Testis (tissue), 5 donors: ENCODE measurements at regions of chr15 and their contacts with region 1.

Region 1: GRCh38 chr15:98518823-98519561 is 129.3 kb upstream of the IGF1R start:
- DNase-seq: peak; percentile 69
- H3K4me3 ChIP-seq: no peak overlapping the region
- H3K27ac ChIP-seq: no peak overlapping the region
- H3K4me1 ChIP-seq: no peaks in the 10 kb centered on the region
- H3K27me3 ChIP-seq: no peaks in the 10 kb centered on the region
- CTCF ChIP-seq: peak; percentile 69 to 93 (median 84)
- POLR2A ChIP-seq: no peak

Region 2: DNA sequence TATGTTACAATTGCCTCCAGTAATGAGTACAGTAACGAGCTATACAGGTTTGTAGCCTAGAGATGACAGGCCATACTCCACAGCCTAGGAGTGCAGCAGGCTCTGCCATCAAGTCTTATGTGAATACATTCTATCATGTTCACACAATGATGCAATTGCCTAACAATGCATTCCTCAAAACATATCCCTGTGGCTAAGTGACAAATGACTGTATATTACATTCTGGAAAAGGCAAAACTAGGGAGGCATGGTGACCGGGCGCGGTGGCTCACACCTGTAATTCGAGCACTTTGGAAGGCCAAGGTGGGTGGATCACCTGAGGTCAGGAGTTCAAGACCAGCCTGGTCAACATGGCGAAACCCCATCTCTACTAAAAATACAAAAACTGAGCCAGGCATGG is 63.0 kb before region 1 on chr15:
- intact Hi-C with region 1: no loop called
- DNase-seq: no peak
- H3K4me3 ChIP-seq: no peak overlapping the region
- H3K27ac ChIP-seq: no peak overlapping the region
- H3K4me1 ChIP-seq: no peaks in the 10 kb centered on the region
- H3K27me3 ChIP-seq: no peaks in the 10 kb centered on the region
- CTCF ChIP-seq: no peak
- POLR2A ChIP-seq: no peak

Region 3: GRCh38 chr15:98609144-98609857 is 90.3 kb after region 1 on chr15:
- intact Hi-C with region 1: no loop called
- DNase-seq: no peak
- H3K4me3 ChIP-seq: no peak overlapping the region
- H3K27ac ChIP-seq: no peak overlapping the region
- H3K4me1 ChIP-seq: no peaks in the 10 kb centered on the region
- H3K27me3 ChIP-seq: no peaks in the 10 kb centered on the region
- CTCF ChIP-seq: no peak
- POLR2A ChIP-seq: no peak

Region 4: DNA sequence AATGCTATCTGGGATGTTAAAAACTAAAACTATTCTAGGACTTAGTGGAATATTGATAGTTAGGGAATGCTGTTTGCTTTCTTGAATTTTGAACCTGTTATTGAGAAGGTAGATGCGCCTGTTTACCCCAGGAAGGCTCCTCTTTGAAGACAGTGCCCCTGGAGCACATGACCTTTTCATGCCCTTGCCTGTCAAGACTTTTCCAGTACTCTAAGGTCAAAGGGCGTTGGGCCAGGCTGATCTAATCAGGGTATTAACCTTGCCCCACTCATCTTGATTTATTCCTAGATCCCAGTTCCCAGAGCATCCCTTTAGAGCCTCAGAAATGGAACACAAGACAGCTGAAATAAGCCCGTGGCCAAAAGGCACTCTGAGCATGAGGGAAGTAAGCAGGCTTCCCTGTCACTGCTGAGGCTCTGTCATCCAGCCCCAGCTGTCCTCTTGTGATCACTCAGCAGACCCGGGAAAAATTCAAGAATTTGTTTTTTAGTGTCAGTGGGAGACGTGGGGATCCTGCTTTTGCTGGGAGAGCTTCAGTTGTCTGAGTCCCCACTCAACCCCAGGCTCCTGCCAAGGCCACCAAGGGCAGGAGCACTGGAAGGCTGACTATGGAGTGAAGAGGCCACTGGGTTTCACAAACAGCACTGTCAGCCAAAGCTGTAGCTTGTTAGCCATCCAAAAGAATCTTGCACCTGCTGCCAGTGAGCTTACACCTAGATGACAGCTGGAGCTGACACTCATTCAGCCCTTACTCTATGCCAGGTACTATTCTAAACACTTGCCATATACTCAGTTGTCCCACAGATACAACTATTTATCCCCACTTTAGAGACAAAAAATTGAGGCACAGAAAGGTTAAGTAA is 319.6 kb after region 1 on chr15:
- intact Hi-C with region 1: no loop called
- DNase-seq: no peak
- H3K4me3 ChIP-seq: no peak overlapping the region
- H3K27ac ChIP-seq: no peak overlapping the region
- H3K4me1 ChIP-seq: peaks cover 14% of the 10 kb centered on the region
- H3K27me3 ChIP-seq: no peaks in the 10 kb centered on the region
- CTCF ChIP-seq: no peak
- POLR2A ChIP-seq: no peak

Region 5: DNA sequence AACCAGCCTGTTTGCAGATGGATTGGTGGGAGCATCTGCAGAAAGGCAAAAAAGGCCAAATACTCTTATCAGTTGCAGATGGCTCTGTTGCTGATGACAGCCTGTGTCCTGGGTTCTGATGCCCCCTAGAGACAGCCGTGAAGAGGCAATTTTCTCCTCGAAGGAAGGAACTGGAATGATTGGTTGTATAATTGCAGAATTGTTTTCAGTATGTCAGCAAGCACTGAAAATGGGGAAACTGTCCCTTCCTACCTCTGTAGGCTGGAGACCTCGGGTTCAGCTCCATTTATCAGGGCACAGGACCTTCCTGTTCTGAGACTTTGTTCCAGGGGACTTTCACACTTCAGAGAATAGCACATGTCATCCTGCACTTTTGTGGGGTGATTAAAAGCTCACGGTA is 385.6 kb after region 1 on chr15:
- intact Hi-C with region 1: no loop called
- DNase-seq: peak; percentile 41
- H3K4me3 ChIP-seq: no peak overlapping the region
- H3K27ac ChIP-seq: no peak overlapping the region
- H3K4me1 ChIP-seq: peaks cover 18% of the 10 kb centered on the region
- H3K27me3 ChIP-seq: no peaks in the 10 kb centered on the region
- CTCF ChIP-seq: peak in 1 of 3 experiments; percentile 32
- POLR2A ChIP-seq: no peak

Region 6: DNA sequence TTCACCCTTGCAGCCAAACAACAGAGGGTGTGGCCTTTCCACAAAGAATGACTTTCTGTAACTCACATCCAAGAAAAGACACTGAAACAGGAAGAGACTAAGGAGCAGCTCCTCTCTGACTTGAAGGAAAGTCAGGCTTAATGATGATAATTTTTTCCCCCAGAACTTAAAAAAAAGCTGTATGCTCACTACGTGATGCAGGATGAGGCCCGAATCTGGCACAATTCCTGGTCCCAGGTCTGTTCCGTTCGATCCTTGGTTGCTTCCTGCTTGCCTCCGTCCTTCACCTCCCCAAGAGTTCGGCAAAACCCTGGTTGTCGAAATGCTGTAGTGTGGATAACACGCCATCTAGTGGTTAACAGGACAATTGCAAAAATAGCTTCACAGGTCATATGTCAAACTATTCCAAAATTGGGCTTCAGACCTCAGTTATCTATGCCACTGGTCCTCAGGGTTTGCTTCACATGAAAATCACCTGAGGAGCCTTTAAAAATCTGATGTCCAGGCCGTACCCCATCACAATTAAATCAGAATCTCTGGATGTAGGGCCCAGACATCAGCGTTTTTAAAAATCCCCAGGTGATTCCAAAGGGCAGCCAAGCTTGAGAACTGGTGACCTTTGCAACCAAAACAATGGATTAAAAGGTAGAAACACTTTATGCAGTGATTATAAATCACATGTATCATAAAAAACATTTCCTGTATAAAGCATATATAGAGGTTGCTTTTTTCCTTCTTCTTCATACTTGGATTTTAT is 557.7 kb after region 1 on chr15:
- intact Hi-C with region 1: loop called (anchors 10 kb)
- DNase-seq: peak; percentile 76
- H3K4me3 ChIP-seq: no peak overlapping the region
- H3K27ac ChIP-seq: peak overlapping the region in 1 of 2 donors; percentile 21
- H3K4me1 ChIP-seq: no peaks in the 10 kb centered on the region
- H3K27me3 ChIP-seq: no peaks in the 10 kb centered on the region
- CTCF ChIP-seq: peak; percentile 72 to 93 (median 90)
- POLR2A ChIP-seq: no peak